H1 (cell line): ENCODE measurements at regions of chr1 and their contacts with region 1.

Region 1: GRCh38 chr1:214349781-214350180 is 68.8 kb downstream of the SMYD2 start:
- DNase-seq: no peak
- H3K4me3 ChIP-seq: no peak overlapping the region
- H3K27ac ChIP-seq: no peak overlapping the region
- H3K4me1 ChIP-seq: peaks cover 3 to 11% (median 6%) of the 10 kb centered on the region in 4 experiments
- H3K27me3 ChIP-seq: no peaks in the 10 kb centered on the region
- CTCF ChIP-seq: no peak
- EP300 ChIP-seq: no peak
- POLR2A ChIP-seq: no peak
- RAD21 ChIP-seq: no peak

Region 2: DNA sequence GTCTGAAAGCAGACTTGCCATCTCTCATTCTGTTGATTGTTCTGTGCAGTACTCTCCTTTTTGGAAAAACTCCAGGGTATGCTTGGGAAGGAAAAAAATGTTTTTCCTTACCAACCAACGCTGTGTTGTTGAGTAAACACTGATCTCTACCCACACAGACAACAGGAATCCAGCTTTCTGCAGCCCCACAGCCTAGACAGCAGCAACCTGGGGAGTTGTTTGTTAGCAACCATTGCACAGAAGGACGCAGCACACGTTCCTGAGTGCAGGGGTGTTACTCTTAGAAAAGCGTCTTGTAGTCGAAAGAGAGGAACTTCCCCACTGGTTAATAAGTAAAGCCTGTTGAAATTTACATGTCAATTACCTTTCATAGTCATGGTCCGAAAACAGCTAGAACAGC is 12.3 kb before region 1 on chr1:
- CTCF ChIA-PET with region 1: interaction called, 124 read pairs
- POLR2A ChIA-PET with region 1: interaction called, 5 read pairs
- DNase-seq: no peak
- H3K4me3 ChIP-seq: no peak overlapping the region
- H3K27ac ChIP-seq: 0 out of 2 replicates have a peak overlapping the region, but pooled peaks have one; percentile 33
- H3K4me1 ChIP-seq: peaks cover 2 to 8% (median 6%) of the 10 kb centered on the region in 4 experiments; a peak in 6 of 7 replicates
- H3K27me3 ChIP-seq: no peaks in the 10 kb centered on the region
- CTCF ChIP-seq: no peak
- EP300 ChIP-seq: peak in 1 of 2 experiments; percentile 47; a peak in 1 of 3 replicates
- POLR2A ChIP-seq: no peak
- RAD21 ChIP-seq: no peak